Lower leg skin (tissue), 4 donors: ENCODE measurements at regions of chr16 and their contacts with region 1.

Region 1: DNA sequence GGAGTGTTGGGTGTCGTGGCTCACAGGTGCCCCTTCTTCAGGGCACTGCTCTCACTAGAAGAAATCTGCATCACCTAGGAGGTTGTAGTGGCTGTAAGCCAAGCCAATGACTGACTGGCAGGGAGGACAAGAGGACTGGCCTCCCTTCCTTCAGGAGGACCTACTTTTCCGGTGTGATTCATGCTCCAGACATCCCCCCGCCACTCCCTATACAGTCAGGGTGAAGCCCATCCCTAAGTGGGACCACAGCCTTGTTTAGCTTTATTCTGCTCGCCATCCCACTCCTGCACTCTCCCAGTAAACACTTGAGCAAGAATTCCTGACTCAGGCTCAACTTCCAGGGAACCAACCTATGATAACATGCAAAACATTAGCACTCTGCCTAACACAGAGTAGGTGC is 67.0 kb downstream of the PLCG2 start:
- DNase-seq: no peak
- H3K4me3 ChIP-seq: no peak overlapping the region
- CTCF ChIP-seq: no peak
- POLR2A ChIP-seq: no peak

Region 2: GRCh38 chr16:81595604-81596292 is 250.4 kb before region 1 on chr16:
- intact Hi-C with region 1: no loop called
- DNase-seq: no peak
- H3K4me3 ChIP-seq: no peak overlapping the region
- CTCF ChIP-seq: no peak
- POLR2A ChIP-seq: no peak

Region 3: DNA sequence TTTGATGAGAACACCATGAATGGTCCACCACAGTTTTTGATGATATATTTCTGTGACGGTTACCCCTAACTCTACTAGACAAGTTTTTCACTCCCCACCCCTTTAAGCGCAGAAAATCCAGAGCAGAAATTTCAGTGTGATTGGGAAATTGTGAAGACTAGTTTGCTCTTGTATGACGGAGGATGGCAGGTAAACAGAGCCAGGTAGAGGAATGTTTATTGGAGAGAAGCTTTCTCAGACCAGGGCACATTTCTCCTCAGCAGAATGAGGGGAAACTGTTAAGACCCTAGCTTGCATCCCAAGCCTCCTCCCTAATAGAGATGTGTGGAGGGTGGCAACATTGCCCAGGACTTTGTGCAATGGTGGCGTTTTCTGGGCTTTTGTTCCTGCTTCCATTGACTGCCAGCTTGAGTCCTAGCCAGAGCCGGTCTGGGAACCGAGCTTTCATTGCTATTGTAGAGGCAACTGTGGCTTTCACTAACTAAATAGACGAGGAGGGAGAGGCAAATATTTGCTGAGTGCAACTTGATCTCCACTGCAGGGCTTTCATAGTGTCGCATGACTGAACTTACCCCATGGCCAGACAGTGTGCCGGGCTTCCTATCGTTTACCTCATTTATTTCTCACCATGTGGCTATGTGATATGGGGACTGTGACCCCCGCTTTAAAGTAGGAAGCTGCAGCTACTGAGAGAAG is 483.5 kb after region 1 on chr16:
- intact Hi-C with region 1: loop called (anchors 5 kb)
- DNase-seq: no peak
- H3K4me3 ChIP-seq: no peak overlapping the region
- CTCF ChIP-seq: no peak
- POLR2A ChIP-seq: no peak